AG04450 (cell line): ENCODE measurements at regions of chr10 and their contacts with region 1.

Region 1: DNA sequence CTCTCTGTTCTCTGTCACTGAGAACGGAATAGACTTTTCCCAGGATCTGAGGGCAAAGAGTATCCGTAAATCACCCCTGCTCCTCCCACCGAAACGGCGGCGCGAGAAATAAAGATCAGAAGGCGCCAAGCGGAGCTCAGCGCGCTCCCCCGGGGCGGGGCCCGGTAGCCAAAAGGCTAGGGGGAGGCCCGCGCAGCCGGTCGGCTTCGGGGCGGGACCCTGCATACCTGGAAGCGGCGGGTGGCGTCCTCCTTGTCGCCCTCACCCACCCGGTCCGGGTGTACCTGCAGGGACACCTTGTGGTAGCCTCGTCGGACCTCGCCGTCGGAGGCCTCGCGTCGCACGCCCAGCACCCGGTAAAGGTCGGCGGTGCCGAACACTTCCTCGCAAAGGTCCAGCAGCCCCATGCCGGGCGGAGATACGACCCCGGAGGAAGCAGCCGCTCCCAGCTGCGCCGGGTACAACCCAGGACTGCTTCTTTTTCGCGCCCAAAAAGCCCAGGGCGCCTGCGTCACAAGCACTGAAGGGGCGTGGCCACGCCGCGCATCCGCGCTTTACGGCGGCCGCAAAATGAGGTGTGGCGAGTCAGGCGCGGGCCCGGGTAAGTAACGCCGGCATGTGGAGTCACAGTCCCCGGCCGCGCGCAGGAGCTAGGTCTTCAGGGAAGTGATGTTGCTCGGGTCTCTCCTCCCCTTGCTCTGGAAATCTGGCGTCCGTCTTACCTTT is at the start of gene DNAJC9:
- DNase-seq: peak; percentile 81
- H3K4me3 ChIP-seq: peak within 1 kb of the TSS; percentile 92
- H3K27ac ChIP-seq: peak within 1 kb of the TSS; percentile 77
- H3K27me3 ChIP-seq: no peaks in the 10 kb centered on the region
- CTCF ChIP-seq: no peak
- polyA plus RNA-seq, gene DNAJC9: 13.1 and 18.7 TPM in 2 replicates

Region 2: GRCh38 chr10:73650537-73651331 is 403.8 kb after region 1 on chr10:
- CTCF ChIA-PET with region 1: no interaction called
- POLR2A ChIA-PET with region 1: interaction called, 11 read pairs
- DNase-seq: peak; percentile 65
- H3K4me3 ChIP-seq: no peak overlapping the region
- H3K27ac ChIP-seq: peak overlapping the region; percentile 91
- H3K27me3 ChIP-seq: no peaks in the 10 kb centered on the region
- CTCF ChIP-seq: no peak